ENCODE measurements at regions of chr4 and their contacts with region 1.

Region 1: DNA sequence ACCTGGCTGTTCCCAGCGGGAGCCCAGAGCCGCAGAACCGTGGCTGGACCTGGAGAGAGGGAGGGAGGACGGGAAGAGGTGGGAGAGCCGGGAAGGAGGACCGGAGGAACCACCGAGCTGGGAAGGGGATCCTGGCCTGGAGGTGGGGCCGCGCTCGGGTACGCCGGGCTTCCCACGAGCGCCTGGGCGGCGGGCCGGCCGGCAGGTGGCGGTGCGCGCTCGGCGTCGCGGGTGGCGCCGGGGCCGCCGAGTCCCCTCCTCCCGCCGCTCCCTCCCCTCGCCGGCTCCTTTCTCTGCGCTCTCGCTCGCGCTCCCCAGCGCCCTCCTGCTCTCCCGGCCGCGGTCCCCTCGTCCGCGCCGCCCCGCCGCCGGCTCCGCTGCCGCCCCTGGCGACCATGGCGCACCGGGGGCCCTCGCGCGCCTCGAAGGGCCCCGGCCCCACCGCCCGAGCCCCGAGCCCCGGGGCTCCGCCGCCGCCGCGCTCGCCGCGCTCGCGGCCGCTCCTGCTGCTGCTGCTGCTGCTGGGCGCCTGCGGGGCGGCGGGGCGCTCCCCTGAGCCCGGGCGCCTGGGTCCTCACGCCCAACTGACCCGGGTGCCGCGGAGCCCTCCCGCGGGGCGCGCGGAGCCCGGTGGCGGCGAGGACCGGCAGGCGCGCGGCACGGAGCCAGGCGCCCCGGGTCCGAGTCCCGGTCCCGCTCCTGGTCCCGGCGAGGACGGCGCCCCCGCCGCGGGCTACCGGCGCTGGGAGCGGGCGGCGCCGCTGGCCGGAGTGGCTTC is at the start of gene SORCS2:
- DNase-seq: peak; percentile 22 to 41
- ATAC-seq: peak; percentile 91 to 92
- H3K4me3 ChIP-seq: peak within 1 kb of the TSS; percentile 27 to 44 (median 37)
- H3K27ac ChIP-seq: no peak within 1 kb of the TSS
- H3K4me1 ChIP-seq: peaks cover 6 to 7% of the 10 kb centered on the region in 2 donors
- H3K27me3 ChIP-seq: peaks cover 17 to 46% (median 26%) of the 10 kb centered on the region in 3 donors
- CTCF ChIP-seq: peak; percentile 49 to 93 (median 90)
- POLR2A ChIP-seq: no peak
- total RNA-seq, gene SORCS2: 0.07 to 1.2 (median 0.11) TPM

Region 2: GRCh38 chr4:6716018-6716911 is 476.2 kb before region 1 on chr4 and contains the start of gene BLOC1S4:
- in situ Hi-C with region 1: no loop called
- intact Hi-C with region 1: no loop called
- DNase-seq: peak; percentile 81 to 86
- ATAC-seq: peak; percentile 87 to 88
- H3K4me3 ChIP-seq: peak within 1 kb of the TSS; percentile 75 to 89 (median 80)
- H3K27ac ChIP-seq: peak within 1 kb of the TSS; percentile 85 to 95 (median 92)
- H3K4me1 ChIP-seq: peaks cover 27 to 28% of the 10 kb centered on the region in 2 donors
- H3K27me3 ChIP-seq: no peaks in the 10 kb centered on the region
- CTCF ChIP-seq: peak in 3 of 5 experiments; percentile 30 to 36 (median 34)
- POLR2A ChIP-seq: peak; percentile 85 to 95
- total RNA-seq, gene BLOC1S4: 15.7 to 25.7 (median 22.3) TPM

Region 3: DNA sequence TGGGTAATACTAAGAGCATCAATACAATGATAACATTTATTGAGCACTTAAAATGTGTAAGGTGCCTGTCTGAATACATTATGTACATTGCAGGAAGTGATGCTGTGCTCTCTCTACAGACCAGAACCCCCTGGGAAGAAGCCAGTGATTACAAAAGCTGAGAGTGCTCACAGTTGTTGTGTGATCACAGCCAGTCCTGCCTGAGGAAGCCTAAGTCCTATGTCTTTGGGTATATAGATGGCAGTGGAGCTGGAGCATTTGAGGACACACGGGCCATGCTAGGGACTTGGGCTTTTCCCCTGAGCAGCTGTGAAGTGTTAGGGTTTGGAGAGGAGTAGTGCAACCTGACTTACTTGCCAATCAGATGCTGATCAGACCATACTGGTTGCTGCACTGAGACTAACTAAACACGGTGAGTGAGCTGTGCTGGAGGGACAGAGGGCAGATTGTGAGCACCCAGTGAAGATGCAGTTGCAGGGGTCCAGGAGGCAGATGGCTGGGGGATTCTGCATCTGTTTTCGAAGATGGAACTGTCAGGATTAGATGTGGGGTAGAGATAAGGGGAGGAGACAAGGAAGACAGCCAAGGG is 343.6 kb before region 1 on chr4:
- in situ Hi-C with region 1: no loop called
- intact Hi-C with region 1: no loop called
- DNase-seq: peak; percentile 33 to 42
- ATAC-seq: peak; percentile 50 to 58
- H3K4me3 ChIP-seq: no peak overlapping the region
- H3K27ac ChIP-seq: peak overlapping the region; percentile 42 to 71 (median 63)
- H3K4me1 ChIP-seq: peaks cover 35 to 38% of the 10 kb centered on the region in 2 donors
- H3K27me3 ChIP-seq: no peaks in the 10 kb centered on the region
- CTCF ChIP-seq: no peak
- POLR2A ChIP-seq: no peak

Region 4: DNA sequence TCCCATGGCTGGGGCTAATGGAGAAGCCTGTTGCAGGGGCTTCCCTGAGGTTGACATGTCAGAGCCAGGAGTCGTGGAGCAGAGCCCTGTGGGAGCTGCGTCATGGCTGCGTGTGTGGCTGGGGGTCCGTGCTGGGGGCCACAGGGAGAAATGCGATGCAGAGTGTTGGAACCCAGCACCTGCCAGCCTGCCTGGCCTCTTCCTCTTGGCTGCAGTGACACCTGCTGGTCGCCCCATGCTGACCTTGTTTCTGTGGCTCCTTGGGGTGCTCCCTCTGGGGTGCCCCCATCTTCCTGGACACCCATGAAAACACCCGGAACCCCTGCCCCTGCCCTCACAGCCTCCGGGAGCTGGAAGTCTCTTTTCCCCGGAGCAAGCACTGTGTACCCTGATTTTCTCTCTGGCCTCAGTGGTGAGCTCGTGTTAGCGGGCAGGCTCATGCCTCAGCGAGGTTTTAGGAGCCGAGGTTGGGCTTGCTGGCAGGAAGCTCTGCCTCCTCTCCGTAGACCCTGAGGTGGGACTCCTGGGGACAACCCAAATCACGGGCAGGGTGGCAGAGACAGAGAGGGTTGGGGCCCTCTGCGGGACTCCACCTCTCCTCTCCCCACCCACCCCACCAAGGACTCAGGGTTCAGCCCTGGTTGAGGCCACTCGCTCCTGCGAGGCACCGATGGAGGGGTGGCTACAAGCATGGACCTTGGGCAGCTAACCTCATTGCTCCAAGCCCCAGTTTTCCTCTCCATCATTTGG is 103.6 kb after region 1 on chr4:
- in situ Hi-C with region 1: loop called (anchors 5 to 10 kb)
- intact Hi-C with region 1: loop called (anchors 1 kb)
- DNase-seq: no peak
- ATAC-seq: peak; percentile 25 to 61
- H3K4me3 ChIP-seq: no peak overlapping the region
- H3K27ac ChIP-seq: no peak overlapping the region
- H3K4me1 ChIP-seq: no peaks in the 10 kb centered on the region
- H3K27me3 ChIP-seq: peaks cover 0 to 18% (median 6%) of the 10 kb centered on the region in 3 donors
- CTCF ChIP-seq: peak; percentile 72 to 84 (median 80)
- POLR2A ChIP-seq: no peak

Region 5: DNA sequence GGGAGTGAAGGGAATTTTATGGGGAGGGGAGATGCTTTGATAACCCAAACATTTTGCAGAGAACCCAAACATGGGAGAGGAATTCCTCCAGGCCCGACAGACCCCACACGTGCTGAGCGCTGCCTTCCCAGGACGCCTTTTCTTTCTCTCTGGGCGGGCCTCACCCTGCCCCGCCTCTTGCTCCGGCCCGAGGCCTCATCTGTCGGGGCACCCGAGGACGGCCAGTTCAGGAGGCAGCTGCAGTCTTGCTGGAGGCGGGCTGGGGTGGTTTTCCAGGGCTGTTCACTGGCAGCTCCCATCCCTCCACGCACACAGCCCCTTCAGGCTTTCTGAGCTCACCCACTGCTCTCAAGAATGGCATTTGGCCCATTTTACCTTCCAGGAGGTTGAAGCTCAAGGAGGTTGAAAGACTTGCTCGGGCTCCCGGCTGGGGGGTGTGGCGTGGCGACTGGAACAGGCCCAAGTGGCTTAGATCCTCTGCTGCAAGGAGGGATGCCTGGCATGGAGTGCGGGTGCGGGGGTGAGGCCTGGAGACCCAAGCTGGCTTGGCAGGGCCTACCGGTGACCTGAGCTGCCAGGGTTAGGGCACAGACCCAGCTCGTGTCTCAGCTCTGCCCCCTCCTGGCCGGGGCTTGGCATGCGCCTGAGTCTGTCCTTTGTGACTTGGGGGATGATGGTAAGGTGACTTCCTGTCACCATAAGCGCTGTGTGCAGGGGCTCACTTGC is 143.1 kb after region 1 on chr4:
- in situ Hi-C with region 1: no loop called
- intact Hi-C with region 1: loop called (anchors 1 kb)
- DNase-seq: peak in 1 of 2 donors; percentile 38
- ATAC-seq: peak; percentile 58 to 74
- H3K4me3 ChIP-seq: no peak overlapping the region
- H3K27ac ChIP-seq: no peak overlapping the region
- H3K4me1 ChIP-seq: no peaks in the 10 kb centered on the region
- H3K27me3 ChIP-seq: no peaks in the 10 kb centered on the region
- CTCF ChIP-seq: peak; percentile 25 to 60 (median 49)
- POLR2A ChIP-seq: no peak

Measured in gastrocnemius medialis (tissue), 4 donors.